ENCODE measurements at regions of chr11 and their contacts with region 1.

Region 1: DNA sequence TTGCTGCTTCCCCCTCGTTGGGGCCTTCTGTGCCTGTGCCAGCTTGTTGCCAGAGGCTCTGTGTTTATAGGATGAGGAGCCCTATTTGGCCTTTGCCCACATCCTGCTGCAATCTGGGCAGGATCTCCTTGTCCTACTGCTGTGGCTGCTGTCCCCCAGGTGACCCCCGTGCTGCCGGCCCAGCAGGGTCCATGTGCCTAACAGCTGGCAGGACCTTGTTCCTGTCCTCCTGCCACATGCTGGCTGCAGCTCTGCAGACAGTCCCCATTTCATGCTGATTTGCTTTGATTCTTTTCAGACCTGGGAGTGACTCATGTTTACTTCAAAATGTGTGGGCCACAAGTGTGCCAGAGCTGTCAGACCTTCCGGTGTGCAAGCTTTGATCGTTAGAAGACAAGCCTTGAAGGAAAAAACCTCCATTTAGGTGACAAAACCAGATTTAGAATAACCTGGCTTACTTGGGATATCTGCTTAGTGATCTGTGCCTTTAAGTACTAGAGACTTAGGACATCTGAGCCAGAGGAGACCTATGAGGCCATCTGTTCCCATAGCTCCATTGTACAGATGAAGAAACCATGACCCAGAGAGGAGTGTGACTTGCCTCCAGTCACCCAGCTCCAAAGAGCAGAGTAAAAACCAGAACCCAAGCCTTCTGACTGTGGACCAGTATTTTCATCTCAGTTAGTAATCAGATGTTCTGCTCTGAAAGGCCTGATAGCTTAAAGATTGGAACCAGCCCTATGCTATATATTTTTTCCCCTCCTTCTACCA is 11.1 kb downstream of the NAV2 start:
- DNase-seq: peak; percentile 56 to 81 (median 66)
- H3K4me3 ChIP-seq: no peak overlapping the region
- H3K4me3 Mint-ChIP-seq: peak overlapping the region in 7 of 8 donors; percentile 18 to 83 (median 62)
- H3K27ac ChIP-seq: peak overlapping the region; percentile 30
- H3K27ac Mint-ChIP-seq: peak overlapping the region; percentile 90 to 98 (median 94)
- H3K4me1 ChIP-seq: peaks cover 31% of the 10 kb centered on the region
- H3K4me1 Mint-ChIP-seq: peaks cover 29 to 59% (median 35%) of the 10 kb centered on the region in 4 donors
- H3K27me3 ChIP-seq: no peaks in the 10 kb centered on the region
- H3K27me3 Mint-ChIP-seq: no peaks in the 10 kb centered on the region

Region 2: DNA sequence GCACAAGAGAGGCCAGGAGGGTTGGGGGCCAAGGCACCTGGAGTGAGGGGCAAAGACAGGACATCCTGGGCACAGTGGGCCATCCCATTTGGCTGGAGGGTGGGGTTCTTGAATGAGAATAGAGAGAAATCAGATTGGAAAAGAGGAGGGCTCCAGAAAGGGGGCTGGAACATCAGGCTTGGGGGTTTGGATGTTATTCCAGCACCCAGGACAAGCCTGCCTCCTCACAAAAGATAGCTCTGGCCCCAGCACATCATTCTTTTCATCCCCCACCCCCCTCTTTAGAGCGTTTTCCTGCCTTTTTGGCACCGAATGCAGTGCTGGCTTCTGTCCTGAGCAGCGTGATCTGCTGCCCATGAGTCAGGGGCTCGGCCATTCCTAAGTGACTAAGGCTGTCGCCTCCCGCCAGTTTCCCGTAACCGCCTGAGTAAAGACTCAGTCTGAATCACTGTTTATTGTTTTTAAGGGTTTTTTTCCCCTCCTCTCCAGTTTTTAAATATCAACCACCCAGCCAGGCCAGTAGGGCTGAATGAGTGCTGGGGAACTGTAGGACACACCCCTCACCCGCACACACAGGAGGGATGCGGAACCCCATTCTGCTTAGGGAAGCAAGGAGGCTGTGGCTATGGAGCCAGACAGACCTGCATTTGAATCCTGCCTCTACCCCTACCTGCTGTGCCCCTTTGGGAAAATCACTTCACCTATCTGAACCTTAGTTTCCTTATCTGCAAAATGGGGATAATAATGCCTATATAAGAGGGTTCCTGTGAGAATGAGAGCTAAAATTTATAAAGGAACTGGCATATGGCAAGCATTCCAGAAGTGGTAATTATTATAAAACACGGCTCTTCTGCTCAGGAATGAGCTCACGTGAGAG is 43.6 kb before region 1 on chr11:
- CTCF ChIA-PET with region 1: no interaction called
- POLR2A ChIA-PET with region 1: no interaction called
- intact Hi-C with region 1: no loop called
- DNase-seq: no peak
- H3K4me3 ChIP-seq: no peak overlapping the region
- H3K4me3 Mint-ChIP-seq: no peak overlapping the region
- H3K27ac ChIP-seq: no peak overlapping the region
- H3K27ac Mint-ChIP-seq: no peak overlapping the region
- H3K4me1 ChIP-seq: no peaks in the 10 kb centered on the region
- H3K4me1 Mint-ChIP-seq: peaks cover 0 to under 1% (median 0%) of the 10 kb centered on the region in 4 donors
- H3K27me3 ChIP-seq: no peaks in the 10 kb centered on the region
- H3K27me3 Mint-ChIP-seq: peaks cover 2 to 4% of the 10 kb centered on the region in 2 donors

Region 3: DNA sequence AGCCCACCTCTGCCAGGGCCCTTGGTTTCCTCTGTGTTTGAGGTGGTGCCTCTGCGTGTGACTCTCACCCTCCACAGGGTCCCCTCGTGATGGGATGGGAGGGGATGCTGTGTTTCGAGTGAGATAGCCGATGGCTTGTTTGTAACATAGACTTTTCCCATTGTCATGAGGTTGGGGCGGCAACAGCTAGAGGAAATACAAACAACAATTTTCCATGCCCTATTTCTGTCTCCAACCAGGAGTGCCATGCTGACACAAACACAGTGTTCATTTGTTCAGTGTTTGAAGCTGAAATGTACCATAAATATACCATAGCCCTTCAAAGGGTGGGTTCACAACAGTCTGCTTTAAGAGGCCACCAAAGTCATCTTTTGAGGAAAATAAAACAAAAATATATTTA is 30.6 kb before region 1 on chr11:
- CTCF ChIA-PET with region 1: no interaction called
- POLR2A ChIA-PET with region 1: no interaction called
- intact Hi-C with region 1: no loop called
- DNase-seq: no peak
- H3K4me3 ChIP-seq: no peak overlapping the region
- H3K4me3 Mint-ChIP-seq: no peak overlapping the region
- H3K27ac ChIP-seq: no peak overlapping the region
- H3K27ac Mint-ChIP-seq: no peak overlapping the region
- H3K4me1 ChIP-seq: no peaks in the 10 kb centered on the region
- H3K4me1 Mint-ChIP-seq: peaks cover 0 to 1% (median 0%) of the 10 kb centered on the region in 4 donors
- H3K27me3 ChIP-seq: no peaks in the 10 kb centered on the region
- H3K27me3 Mint-ChIP-seq: peaks cover 2 to 5% of the 10 kb centered on the region in 2 donors

Region 4: GRCh38 chr11:19735157-19735908 is 11.6 kb after region 1 on chr11:
- CTCF ChIA-PET with region 1: interaction called, 8 read pairs
- POLR2A ChIA-PET with region 1: interaction called, 16 read pairs
- intact Hi-C with region 1: no loop called
- DNase-seq: no peak
- H3K4me3 ChIP-seq: no peak overlapping the region
- H3K4me3 Mint-ChIP-seq: no peak overlapping the region
- H3K27ac ChIP-seq: no peak overlapping the region
- H3K27ac Mint-ChIP-seq: peak overlapping the region in 1 of 7 donors; percentile 25
- H3K4me1 ChIP-seq: no peaks in the 10 kb centered on the region
- H3K4me1 Mint-ChIP-seq: no peaks in the 10 kb centered on the region
- H3K27me3 ChIP-seq: no peaks in the 10 kb centered on the region
- H3K27me3 Mint-ChIP-seq: peaks cover 0 to 2% of the 10 kb centered on the region in 2 donors

Region 5: DNA sequence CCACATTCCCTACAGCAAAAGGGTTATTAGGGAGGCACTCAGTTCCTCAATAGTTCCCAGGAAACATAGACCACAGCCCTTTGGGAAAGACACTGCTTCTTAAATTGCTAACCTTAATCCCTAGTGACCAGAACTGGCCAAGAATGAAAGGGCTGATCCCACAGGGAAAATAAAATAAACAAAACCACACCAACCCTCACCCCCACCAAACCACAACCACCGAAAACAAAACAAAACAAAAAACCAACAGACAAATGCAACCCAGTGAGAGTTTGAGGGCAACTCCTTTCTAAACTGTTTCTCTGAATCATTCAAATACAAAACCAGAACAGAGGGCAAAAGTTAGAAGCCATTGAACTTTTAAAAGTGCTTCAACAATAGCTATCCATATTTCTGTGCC is 46.1 kb after region 1 on chr11:
- CTCF ChIA-PET with region 1: no interaction called
- POLR2A ChIA-PET with region 1: no interaction called
- intact Hi-C with region 1: no loop called
- DNase-seq: no peak
- H3K4me3 ChIP-seq: no peak overlapping the region
- H3K4me3 Mint-ChIP-seq: no peak overlapping the region
- H3K27ac ChIP-seq: no peak overlapping the region
- H3K27ac Mint-ChIP-seq: no peak overlapping the region
- H3K4me1 ChIP-seq: no peaks in the 10 kb centered on the region
- H3K4me1 Mint-ChIP-seq: no peaks in the 10 kb centered on the region
- H3K27me3 ChIP-seq: no peaks in the 10 kb centered on the region
- H3K27me3 Mint-ChIP-seq: peaks cover 8 to 14% of the 10 kb centered on the region in 2 donors

Region 6: DNA sequence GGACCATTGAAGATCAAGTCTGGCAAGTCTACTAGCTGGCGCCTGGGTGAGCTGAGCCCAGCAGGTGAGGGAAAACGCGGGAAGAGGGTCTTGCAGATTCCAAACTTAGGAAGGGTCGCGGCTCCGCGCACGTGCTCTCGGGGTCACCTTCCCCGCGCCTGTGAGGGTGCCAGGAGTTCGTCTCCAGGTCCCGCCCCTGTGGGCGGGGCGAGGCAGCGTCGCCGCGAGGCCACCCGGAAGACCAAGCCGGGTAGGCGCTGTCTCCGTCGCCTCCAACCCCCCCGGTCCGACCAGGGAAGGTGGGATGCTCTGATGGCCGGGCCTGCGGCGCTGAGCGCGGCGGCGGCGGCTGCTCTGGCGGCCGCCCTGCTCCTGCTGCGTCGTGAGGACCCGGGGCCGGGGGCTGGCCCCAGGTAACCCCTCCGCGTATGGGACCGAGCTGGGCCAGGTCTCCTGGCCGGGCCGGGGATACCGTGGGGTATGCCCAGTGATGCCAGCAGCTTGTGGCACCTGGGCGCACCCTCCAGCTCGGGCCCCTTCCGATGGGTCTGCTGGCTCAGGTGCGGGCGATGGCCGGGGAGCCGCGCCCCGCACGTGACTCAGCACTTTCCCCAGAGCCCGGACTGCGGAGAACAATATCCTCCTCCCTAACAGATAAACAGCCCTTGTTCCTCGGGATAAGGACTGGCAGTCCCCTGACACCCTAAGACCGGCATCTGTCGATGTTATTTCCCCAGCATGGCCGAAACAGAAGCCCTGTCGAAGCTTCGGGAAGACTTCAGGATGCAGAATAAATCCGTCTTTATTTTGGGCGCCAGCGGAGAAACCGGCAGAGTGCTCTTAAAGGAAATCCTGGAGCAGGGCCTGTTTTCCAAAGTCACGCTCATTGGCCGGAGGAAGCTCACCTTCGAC is 640.0 kb after region 1 on chr11 and contains the start of gene HTATIP2:
- CTCF ChIA-PET with region 1: no interaction called
- POLR2A ChIA-PET with region 1: no interaction called
- intact Hi-C with region 1: loop called (anchors 10 kb)
- DNase-seq: peak; percentile 73 to 80 (median 77)
- H3K4me3 ChIP-seq: peak within 1 kb of the TSS; percentile 24 to 78
- H3K4me3 Mint-ChIP-seq: peak within 1 kb of the TSS; percentile 89 to 95 (median 92)
- H3K27ac ChIP-seq: peak within 1 kb of the TSS; percentile 70
- H3K27ac Mint-ChIP-seq: peak within 1 kb of the TSS; percentile 91 to 98 (median 95)
- H3K4me1 ChIP-seq: peaks cover 64% of the 10 kb centered on the region
- H3K4me1 Mint-ChIP-seq: peaks cover 50 to 77% (median 64%) of the 10 kb centered on the region in 4 donors
- H3K27me3 ChIP-seq: no peaks in the 10 kb centered on the region
- H3K27me3 Mint-ChIP-seq: no peaks in the 10 kb centered on the region
- total RNA-seq, gene HTATIP2: 45.3 to 49.9 TPM

Measured in CD4-positive, alpha-beta memory T cell (primary cell).